ENCODE measurements at regions of chr3 and their contacts with region 1.

Region 1: DNA sequence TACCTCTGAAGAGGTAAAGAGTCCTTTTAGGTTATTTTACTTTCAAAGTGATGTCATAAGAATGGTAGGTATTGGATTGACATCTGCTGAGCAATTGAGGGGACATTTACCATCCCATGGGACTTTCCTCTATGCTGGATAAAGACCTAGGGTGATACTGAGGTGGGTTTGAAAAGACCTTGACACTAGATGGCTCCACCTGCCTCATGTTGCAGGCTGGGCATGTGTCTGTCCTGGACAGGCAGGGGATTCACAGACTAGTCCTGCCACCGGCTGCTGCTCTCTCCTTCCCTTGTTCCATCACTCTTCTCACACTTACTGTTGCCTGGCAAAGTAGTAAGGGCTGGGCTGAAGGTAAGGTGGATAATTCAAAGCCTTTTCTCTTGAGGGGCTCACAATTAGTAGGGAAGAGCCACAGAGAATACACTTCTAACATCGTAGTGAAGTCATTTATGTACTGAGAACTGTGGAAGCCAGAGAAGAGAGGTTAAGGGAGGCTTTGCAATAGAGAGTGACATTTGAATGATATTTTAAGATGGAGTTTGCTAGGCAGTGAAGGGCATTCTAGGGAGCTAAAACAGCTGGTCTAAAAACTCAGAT is 27.7 kb downstream of the TRAK1 start:
- DNase-seq: peak in 1 of 3 donors; percentile 67
- ATAC-seq: peak; percentile 78
- H3K4me3 ChIP-seq: no peak overlapping the region
- H3K4me1 ChIP-seq: peaks cover 10% of the 10 kb centered on the region
- CTCF ChIP-seq: no peak

Region 2: GRCh38 chr3:42190701-42191462 is 72.0 kb after region 1 on chr3:
- intact Hi-C with region 1: loop called in 1 of 2 experiments (anchors 5 kb)
- DNase-seq: peak in 1 of 3 donors; percentile 95
- ATAC-seq: peak; percentile 87
- H3K4me3 ChIP-seq: no peak overlapping the region
- H3K4me1 ChIP-seq: no peaks in the 10 kb centered on the region
- CTCF ChIP-seq: peak; percentile 65